ENCODE measurements at regions of chr11 and their contacts with region 1.

Region 1: DNA sequence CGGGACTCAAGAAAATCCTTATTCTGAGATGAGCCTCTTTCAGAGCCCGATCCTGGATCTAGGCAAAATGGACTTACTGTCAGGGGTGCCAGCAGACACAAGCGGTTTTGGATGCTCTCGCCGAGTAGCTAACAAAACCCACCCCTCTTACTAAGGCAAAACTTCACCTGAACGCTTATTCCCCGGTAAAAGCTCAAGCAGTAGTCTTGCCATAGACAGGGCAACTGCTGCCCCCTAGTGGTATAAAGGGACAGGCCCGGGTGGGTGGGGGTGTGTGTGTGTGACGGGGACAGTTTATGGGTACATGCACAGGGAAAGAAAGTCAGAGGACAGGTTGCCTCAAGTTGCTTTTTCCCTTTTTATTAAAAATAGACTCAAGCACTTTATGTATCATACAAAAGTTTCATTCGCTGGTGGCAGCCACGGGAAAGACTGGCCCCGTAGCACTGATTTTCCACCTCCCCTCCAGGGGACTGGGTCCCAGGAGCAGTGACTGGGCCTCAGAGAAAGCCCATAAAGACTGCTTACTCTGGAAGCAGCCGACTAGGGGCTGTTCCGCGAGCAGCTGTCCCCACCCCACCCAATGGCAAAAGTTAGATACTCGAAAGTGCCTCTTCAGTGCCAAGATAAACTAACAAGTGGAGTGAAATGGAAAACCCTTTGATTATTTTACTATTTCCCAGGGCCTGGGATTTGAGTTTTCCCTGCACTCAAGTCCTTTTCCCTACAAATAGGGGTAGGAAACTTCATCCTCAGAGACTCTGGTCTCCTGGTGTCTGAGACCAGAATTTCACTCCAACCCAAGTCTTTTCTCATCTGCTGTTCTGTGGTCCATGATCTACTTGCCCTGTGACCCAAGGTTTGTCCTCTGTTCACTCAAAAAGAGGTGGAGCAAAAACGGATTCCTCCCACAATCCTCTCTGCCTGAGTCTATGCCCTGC is 4.7 kb downstream of the YPEL4 start:
- DNase-seq: peak; percentile 86 to 91
- H3K4me3 ChIP-seq: no peak overlapping the region
- H3K4me3 Mint-ChIP-seq: no peak overlapping the region
- H3K27ac Mint-ChIP-seq: no peak overlapping the region
- H3K4me1 ChIP-seq: peaks cover 17% of the 10 kb centered on the region
- H3K4me1 Mint-ChIP-seq: peaks cover 8% of the 10 kb centered on the region
- H3K27me3 ChIP-seq: peaks cover 2% of the 10 kb centered on the region; the same call in 1 of the 2 replicates
- H3K27me3 Mint-ChIP-seq: peaks cover 9% of the 10 kb centered on the region
- CTCF ChIP-seq: peak; percentile 91 to 96

Region 2: DNA sequence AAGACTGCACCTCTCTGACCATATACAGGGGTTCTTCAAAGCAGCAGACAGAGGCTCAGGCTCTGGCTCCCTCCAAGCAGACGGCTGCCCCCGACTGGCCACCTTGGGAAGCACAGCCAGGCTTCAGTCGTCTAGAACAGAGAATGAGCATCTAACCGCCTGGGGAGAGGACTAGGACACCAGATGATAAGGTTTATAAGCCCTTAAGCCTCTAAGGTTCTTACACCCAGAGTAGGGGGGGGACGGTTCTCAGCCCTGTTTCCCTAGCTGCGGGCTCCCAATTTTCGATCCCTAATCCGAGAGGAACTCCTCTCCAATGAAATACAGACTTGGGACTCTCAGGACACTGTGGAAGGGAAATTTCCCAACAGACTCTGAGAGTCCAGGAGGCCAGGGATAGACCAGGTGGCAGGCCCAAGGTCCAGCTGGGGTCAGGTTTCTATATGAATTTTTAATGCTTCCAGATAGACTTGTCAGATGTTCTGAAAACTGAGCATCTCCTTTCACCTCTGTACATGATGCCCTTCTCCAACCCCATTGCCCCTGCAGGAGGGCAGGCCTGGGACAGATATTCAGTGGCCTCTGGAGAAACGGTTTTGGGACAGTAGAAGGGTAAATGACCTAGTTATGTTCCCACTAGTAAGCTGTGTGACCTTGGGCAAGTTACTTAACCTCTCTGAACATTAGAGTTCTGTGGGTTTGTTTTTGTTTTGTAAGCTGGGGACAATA is 164.4 kb before region 1 on chr11:
- CTCF ChIA-PET with region 1: interaction called, 10 read pairs
- POLR2A ChIA-PET with region 1: no interaction called
- intact Hi-C with region 1: loop called (anchors 5 kb)
- DNase-seq: peak; percentile 73 to 80
- H3K4me3 ChIP-seq: no peak overlapping the region
- H3K4me3 Mint-ChIP-seq: no peak overlapping the region
- H3K27ac Mint-ChIP-seq: peak overlapping the region; percentile 5
- H3K4me1 ChIP-seq: peaks cover 5% of the 10 kb centered on the region; the same call in 1 of the 2 replicates
- H3K4me1 Mint-ChIP-seq: peaks cover 16% of the 10 kb centered on the region
- H3K27me3 ChIP-seq: no peaks in the 10 kb centered on the region
- H3K27me3 Mint-ChIP-seq: no peaks in the 10 kb centered on the region
- CTCF ChIP-seq: peak; percentile 61 to 74

Region 3: DNA sequence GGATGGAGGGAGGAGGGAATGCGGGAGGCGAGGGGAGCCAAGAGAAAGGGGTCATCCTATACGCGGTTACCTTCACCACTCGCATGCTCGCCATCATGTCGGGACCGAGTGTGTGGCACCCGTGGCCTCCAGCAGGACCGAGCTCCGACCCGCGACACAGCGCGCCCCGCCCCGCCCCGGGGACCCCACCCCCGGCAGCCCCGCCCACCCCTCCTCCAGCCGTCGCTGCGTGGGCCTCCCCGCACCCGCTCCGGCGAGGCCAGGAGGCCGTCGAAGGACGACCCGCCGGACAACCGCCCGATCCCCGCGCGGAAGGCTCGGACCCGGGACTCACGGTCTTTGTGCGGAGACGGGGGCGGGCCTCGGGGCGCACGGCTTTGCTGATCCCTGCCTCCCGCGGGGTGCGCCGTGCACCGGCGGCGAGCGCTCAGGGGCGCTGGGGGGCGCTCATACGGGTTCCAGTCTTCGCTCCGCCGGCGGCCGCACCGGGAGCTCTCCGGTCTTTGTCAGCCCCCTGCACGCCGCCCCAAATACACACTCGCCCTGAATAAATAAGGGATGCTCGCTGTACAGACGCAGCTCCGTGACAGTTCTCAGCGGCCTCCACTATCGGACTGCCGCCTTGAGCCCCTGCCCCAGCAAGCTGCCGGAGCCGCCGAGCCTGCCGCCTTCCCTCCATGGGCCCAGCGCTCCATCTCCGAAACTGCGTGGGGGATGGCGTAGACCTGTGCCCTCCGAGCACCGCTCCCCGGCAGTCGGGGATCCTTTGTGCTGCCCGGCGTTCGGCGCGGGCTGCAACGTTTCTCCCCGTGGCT is 77.3 kb before region 1 on chr11 and contains the start of gene UBE2L6:
- CTCF ChIA-PET with region 1: interaction called, 82 read pairs
- POLR2A ChIA-PET with region 1: no interaction called
- intact Hi-C with region 1: loop called (anchors 1 kb)
- DNase-seq: peak; percentile 55 to 67
- H3K4me3 ChIP-seq: peak within 1 kb of the TSS; percentile 54
- H3K4me3 Mint-ChIP-seq: peak within 1 kb of the TSS; percentile 96
- H3K27ac Mint-ChIP-seq: peak within 1 kb of the TSS; percentile 40
- H3K4me1 ChIP-seq: peaks cover 10% of the 10 kb centered on the region; the same call in 1 of the 2 replicates
- H3K4me1 Mint-ChIP-seq: peaks cover 14% of the 10 kb centered on the region
- H3K27me3 ChIP-seq: no peaks in the 10 kb centered on the region
- H3K27me3 Mint-ChIP-seq: no peaks in the 10 kb centered on the region
- CTCF ChIP-seq: peak in 1 of 2 experiments; percentile 49
- total RNA-seq, gene UBE2L6: 16.7 and 20.2 TPM in 2 replicates

Region 4: DNA sequence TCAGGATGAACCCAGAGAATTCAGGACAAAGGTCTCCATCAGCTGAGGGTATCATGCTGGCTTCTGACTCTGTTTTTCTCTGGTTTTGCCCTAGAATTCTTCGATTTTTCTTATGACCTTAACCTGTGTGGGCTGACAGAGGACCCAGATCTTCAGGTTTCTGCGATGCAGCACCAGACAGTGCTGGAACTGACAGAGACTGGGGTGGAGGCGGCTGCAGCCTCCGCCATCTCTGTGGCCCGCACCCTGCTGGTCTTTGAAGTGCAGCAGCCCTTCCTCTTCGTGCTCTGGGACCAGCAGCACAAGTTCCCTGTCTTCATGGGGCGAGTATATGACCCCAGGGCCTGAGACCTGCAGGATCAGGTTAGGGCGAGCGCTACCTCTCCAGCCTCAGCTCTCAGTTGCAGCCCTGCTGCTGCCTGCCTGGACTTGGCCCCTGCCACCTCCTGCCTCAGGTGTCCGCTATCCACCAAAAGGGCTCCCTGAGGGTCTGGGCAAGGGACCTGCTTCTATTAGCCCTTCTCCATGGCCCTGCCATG is 30.7 kb before region 1 on chr11:
- CTCF ChIA-PET with region 1: interaction called, 11 read pairs
- POLR2A ChIA-PET with region 1: no interaction called
- intact Hi-C with region 1: no loop called
- DNase-seq: no peak
- H3K4me3 ChIP-seq: no peak overlapping the region
- H3K4me3 Mint-ChIP-seq: no peak overlapping the region
- H3K27ac Mint-ChIP-seq: no peak overlapping the region
- H3K4me1 ChIP-seq: no peaks in the 10 kb centered on the region
- H3K4me1 Mint-ChIP-seq: no peaks in the 10 kb centered on the region
- H3K27me3 ChIP-seq: no peaks in the 10 kb centered on the region
- H3K27me3 Mint-ChIP-seq: no peaks in the 10 kb centered on the region
- CTCF ChIP-seq: no peak

Region 5: GRCh38 chr11:57632116-57632515 is 12.9 kb before region 1 on chr11:
- CTCF ChIA-PET with region 1: interaction called, 15 read pairs
- POLR2A ChIA-PET with region 1: no interaction called
- intact Hi-C with region 1: no loop called
- DNase-seq: peak in 1 of 2 experiments; percentile 31
- H3K4me3 ChIP-seq: no peak overlapping the region
- H3K4me3 Mint-ChIP-seq: no peak overlapping the region
- H3K27ac Mint-ChIP-seq: no peak overlapping the region
- H3K4me1 ChIP-seq: no peaks in the 10 kb centered on the region
- H3K4me1 Mint-ChIP-seq: no peaks in the 10 kb centered on the region
- H3K27me3 ChIP-seq: no peaks in the 10 kb centered on the region
- H3K27me3 Mint-ChIP-seq: peaks cover 5% of the 10 kb centered on the region
- CTCF ChIP-seq: no peak

Measured in Caco-2 (cell line).